Vagina (tissue), 2 donors: ENCODE measurements at regions of chr3 and their contacts with region 1.

Region 1: GRCh38 chr3:57078344-57078634 is 17.8 kb downstream of the SPATA12 start:
- DNase-seq: no peak
- H3K4me3 ChIP-seq: peak overlapping the region; percentile 81 to 90
- H3K27ac ChIP-seq: peak overlapping the region; percentile 80
- H3K4me1 ChIP-seq: peaks cover 22% of the 10 kb centered on the region
- H3K27me3 ChIP-seq: no peaks in the 10 kb centered on the region
- CTCF ChIP-seq: no peak
- POLR2A ChIP-seq: peak in 1 of 2 donors; percentile 12

Region 2: GRCh38 chr3:57007513-57008460 is 70.5 kb before region 1 on chr3:
- intact Hi-C with region 1: loop called (anchors 1 kb)
- DNase-seq: peak in 1 of 2 donors; percentile 94
- H3K4me3 ChIP-seq: peak overlapping the region; percentile 3 to 28
- H3K27ac ChIP-seq: peak overlapping the region; percentile 85
- H3K4me1 ChIP-seq: peaks cover 50% of the 10 kb centered on the region
- H3K27me3 ChIP-seq: no peaks in the 10 kb centered on the region
- CTCF ChIP-seq: no peak
- POLR2A ChIP-seq: no peak

Region 3: DNA sequence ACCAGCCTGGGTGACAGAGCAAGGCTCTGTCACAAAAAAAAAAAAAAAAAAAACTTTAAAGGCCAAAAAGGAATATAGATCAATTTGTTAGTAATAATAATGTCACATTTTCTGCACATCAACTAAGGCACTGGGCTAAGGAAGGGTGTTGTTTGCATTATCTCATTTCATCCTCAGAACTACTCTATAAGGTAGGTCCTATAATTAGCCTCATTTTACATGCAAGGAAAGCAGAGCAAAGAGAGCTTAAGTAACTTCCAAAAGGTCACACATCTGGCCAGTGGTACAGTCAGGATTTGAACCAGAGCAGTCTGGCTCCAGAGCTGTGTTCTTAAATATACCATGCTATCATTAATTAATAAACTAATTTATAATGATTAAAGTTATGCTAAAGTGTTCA is 60.0 kb before region 1 on chr3:
- intact Hi-C with region 1: no loop called
- DNase-seq: no peak
- H3K4me3 ChIP-seq: no peak overlapping the region
- H3K27ac ChIP-seq: no peak overlapping the region
- H3K4me1 ChIP-seq: peaks cover 7% of the 10 kb centered on the region
- H3K27me3 ChIP-seq: no peaks in the 10 kb centered on the region
- CTCF ChIP-seq: no peak
- POLR2A ChIP-seq: no peak